K562 (cell line): ENCODE measurements at regions of chr15 and their contacts with region 1.

Region 1: DNA sequence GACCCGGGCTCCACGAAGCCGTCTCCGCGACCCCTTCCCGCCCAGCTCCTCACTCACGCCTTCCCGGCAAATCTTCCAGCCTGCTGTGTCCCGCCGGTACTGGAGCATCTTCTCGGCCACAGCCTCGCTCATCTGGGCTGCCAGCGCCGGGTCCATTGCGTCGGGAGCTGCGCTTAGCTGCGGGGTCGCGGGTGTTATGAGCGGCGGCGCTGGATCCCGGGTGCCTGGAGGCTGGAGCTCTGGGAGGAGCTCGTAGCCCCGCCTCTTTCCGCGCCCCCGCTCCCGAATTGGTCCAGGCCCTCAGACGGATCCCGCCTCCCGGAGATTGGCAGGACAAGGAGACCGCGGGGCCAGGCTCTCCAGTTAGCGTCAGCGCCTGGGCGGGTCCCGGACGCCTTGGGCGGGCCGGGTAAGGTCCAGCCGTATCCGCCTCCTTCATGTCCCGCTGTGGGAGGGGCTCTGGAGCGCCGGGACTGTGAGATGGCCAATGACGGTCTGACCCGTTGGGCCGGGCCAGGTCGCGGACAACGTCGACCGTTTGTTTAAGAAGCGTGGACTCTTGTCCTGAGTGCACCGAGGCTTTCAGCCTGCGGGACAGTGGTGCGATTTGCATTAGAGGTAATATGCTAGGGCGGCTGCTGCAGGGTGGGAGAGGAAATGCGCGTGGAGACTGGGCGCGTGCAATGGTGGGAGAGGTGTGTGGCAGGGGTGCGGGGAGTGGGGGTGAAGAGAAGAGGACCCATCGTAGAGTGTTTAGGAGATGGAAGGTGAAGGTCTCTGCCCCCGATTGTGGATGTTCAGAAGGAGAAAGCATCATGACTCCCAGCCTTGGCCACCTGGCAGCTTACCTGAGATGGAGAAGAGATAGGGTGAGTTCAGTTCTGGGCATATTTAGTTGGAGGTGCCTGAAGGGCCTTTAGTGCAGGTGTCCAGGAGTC is at the start of gene STARD5:
- DNase-seq: peak; percentile 98
- ATAC-seq: peak; percentile 100
- H3K4me3 ChIP-seq: peak within 1 kb of the TSS; percentile 69
- H3K27ac ChIP-seq: peak within 1 kb of the TSS; percentile 54
- H3K4me1 ChIP-seq: peaks cover 11 to 12% of the 10 kb centered on the region in 2 experiments; a peak in 4 of 5 replicates
- H3K27me3 ChIP-seq: no peaks in the 10 kb centered on the region
- CTCF ChIP-seq: no peak
- EP300 ChIP-seq: no peak
- POLR2A ChIP-seq: peak; percentile 80
- RAD21 ChIP-seq: no peak
- polyA plus RNA-seq, gene STARD5: 1.8 to 2.1 TPM

Region 2: GRCh38 chr15:80989518-80990478 is 334.4 kb before region 1 on chr15 and contains the start of gene MESD:
- CTCF ChIA-PET with region 1: no interaction called
- POLR2A ChIA-PET with region 1: no interaction called
- in situ Hi-C with region 1: no loop called
- intact Hi-C with region 1: loop called (anchors 10 kb)
- DNase-seq: peak; percentile 97 to 99 (median 98)
- ATAC-seq: peak; percentile 97
- H3K4me3 ChIP-seq: peak within 1 kb of the TSS; percentile 65
- H3K27ac ChIP-seq: peak within 1 kb of the TSS; percentile 75
- H3K4me1 ChIP-seq: peaks cover 10 to 42% of the 10 kb centered on the region in 2 experiments
- H3K27me3 ChIP-seq: no peaks in the 10 kb centered on the region
- CTCF ChIP-seq: no peak
- EP300 ChIP-seq: peak; percentile 25; the same call in 1 of the 2 replicates
- POLR2A ChIP-seq: peak; percentile 94
- RAD21 ChIP-seq: no peak
- polyA plus RNA-seq, gene MESD: 11.3 to 17.0 TPM